AG04450 (cell line): ENCODE measurements at regions of chr11 and their contacts with region 1.

Region 1: DNA sequence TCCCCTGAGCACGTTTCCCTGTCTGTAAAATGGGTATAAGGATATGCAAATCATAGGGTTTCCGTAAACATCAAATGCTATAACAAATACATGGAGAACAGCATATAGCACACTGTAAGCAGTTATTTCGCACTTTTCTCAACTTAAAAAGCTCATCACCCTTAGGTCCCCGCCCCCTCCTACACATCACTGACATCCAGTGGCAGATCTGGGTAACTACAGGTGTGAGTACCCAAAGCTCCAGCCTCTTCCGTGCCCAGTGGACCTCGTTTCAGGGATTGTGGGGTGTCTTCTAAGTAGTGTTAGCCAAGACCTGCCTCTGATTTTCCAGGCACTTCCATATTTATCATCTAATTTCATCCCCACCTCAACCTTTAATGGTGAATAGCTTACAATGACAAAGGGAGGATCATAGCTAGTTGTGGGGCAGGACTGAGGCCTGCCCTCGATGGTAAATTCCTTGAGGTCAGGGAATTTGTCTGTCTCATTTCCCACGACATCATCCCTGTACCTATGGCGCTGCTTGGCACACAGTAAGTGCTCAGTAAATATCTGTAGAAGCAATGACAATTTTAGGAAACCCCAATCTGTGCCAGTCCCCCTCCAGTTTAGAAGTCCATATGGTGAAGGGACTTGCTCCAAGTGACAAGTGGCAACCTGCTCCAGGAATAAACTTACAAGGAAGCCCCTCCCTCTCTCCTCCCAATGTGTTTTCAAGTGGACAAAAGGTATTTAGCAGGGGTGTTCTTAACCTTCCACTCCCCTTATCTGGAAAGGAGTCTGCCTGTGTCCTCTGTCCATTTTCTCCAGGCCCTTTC is 340.5 kb downstream of the TENM4 start:
- DNase-seq: no peak
- H3K4me3 ChIP-seq: no peak overlapping the region
- H3K27ac ChIP-seq: no peak overlapping the region
- H3K27me3 ChIP-seq: no peaks in the 10 kb centered on the region
- CTCF ChIP-seq: peak; percentile 88

Region 2: GRCh38 chr11:78651923-78652842 is 448.1 kb before region 1 on chr11:
- CTCF ChIA-PET with region 1: interaction called, 128 read pairs
- POLR2A ChIA-PET with region 1: no interaction called
- DNase-seq: no peak
- H3K4me3 ChIP-seq: no peak overlapping the region
- H3K27ac ChIP-seq: no peak overlapping the region
- H3K27me3 ChIP-seq: no peaks in the 10 kb centered on the region
- CTCF ChIP-seq: no peak

Region 3: DNA sequence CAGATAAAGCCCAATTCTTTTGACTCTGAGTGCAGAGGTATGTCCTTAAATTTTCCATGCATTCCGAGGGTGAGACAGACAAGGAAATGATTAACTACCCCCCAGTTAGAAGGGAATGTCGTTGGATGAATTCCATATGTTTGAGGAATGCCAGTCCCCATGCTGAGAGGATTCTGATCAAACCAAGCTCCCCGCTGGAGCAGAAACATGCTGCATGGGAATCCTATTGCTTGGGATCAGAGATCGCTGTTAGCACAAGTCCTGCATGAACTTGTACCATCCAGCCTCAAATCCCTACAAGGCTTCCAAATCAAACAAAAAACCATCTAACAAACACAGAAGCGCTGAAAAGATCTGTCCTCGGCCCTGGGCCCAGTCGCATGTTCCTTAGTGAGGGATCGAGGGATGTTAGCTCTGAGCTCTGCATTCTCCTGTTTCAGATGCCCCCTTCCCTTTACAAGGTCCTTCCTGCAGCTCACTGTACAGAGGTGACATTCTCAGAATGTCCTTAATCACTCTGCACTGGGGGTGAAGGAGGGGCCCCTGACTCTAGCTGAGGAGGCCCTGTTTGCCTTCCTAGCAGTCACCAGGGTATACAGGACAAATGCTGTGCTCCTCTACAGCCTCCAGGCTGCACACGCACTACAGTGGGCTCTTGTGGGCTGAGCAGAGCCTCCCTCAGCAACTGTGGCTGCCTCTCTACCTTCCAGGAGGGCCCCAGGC is 12.9 kb before region 1 on chr11:
- CTCF ChIA-PET with region 1: interaction called, 13 read pairs
- POLR2A ChIA-PET with region 1: no interaction called
- DNase-seq: no peak
- H3K4me3 ChIP-seq: no peak overlapping the region
- H3K27ac ChIP-seq: peak overlapping the region; percentile 42
- H3K27me3 ChIP-seq: no peaks in the 10 kb centered on the region
- CTCF ChIP-seq: no peak